ENCODE measurements at regions of chr9 and their contacts with region 1.

Region 1: DNA sequence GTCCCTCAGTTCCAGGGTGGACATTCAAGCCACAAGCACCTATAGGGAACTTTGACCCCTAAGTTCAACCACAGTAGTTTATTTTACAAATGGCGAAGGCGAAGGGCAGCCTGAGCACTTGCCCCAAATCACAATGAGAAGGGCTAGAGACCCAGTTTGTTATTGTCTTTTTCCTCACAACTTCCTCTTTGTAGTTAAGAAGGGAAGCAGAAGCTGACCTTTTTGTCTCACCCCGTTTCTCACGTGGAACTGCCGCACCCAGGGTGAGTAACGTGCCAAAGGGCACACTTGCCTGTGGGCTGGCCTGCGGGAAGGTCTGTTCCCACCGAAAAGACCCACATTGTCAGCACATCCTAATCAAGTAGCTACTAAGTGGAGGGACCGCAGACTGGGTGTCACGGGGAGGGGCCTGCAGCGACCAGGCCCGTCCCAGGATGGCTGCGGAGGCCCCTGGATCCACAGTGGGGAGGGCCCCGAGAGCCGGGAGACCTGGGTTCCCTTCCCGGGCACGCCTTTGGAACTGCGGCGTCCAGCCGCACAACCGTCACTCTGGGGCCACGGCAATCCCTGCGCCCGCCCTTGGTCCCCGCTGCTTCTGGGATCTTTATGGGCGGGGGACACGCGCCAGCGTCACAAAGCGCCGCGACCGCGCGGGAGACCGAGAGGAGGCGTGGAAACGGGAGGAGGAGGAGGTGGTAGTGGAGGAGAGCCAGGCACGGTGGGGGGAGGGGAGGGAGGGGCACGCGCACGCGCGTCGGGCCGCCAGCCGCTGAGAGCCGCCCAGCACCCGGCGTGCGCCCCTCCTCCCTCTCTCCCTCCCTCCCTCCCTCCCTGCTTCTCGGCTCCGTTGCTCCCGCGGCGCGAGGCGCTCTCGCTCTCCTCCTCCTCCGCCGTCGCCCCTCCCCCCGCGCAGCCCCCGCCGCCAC is at the start of gene UBE2R2:
- DNase-seq: peak; percentile 92 to 96 (median 94)
- H3K4me3 ChIP-seq: peak within 1 kb of the TSS; percentile 64 to 94
- H3K4me3 Mint-ChIP-seq: peak within 1 kb of the TSS; percentile 91 to 99 (median 96)
- H3K27ac ChIP-seq: peak within 1 kb of the TSS; percentile 89
- H3K27ac Mint-ChIP-seq: peak within 1 kb of the TSS; percentile 96 to 99 (median 98)
- H3K4me1 ChIP-seq: peaks cover 39% of the 10 kb centered on the region
- H3K4me1 Mint-ChIP-seq: peaks cover 30 to 59% (median 44%) of the 10 kb centered on the region in 4 donors
- H3K27me3 ChIP-seq: no peaks in the 10 kb centered on the region
- H3K27me3 Mint-ChIP-seq: no peaks in the 10 kb centered on the region
- total RNA-seq, gene UBE2R2: 31.0 to 31.4 TPM

Region 2: GRCh38 chr9:33024966-33025571 is 791.5 kb before region 1 on chr9 and contains the start of gene DNAJA1:
- CTCF ChIA-PET with region 1: no interaction called
- POLR2A ChIA-PET with region 1: no interaction called
- intact Hi-C with region 1: loop called (anchors 10 kb)
- DNase-seq: peak; percentile 92 to 98 (median 97)
- H3K4me3 ChIP-seq: peak within 1 kb of the TSS; percentile 96 to 100
- H3K4me3 Mint-ChIP-seq: peak within 1 kb of the TSS; percentile 92 to 99 (median 96)
- H3K27ac ChIP-seq: peak within 1 kb of the TSS; percentile 100
- H3K27ac Mint-ChIP-seq: peak within 1 kb of the TSS; percentile 94 to 98 (median 97)
- H3K4me1 ChIP-seq: peaks cover 63% of the 10 kb centered on the region
- H3K4me1 Mint-ChIP-seq: peaks cover 41 to 82% (median 66%) of the 10 kb centered on the region in 4 donors
- H3K27me3 ChIP-seq: no peaks in the 10 kb centered on the region
- H3K27me3 Mint-ChIP-seq: no peaks in the 10 kb centered on the region
- total RNA-seq, gene DNAJA1: 79.8 to 84.4 TPM

Region 3: GRCh38 chr9:33415501-33416038 is 401.0 kb before region 1 on chr9:
- CTCF ChIA-PET with region 1: no interaction called
- POLR2A ChIA-PET with region 1: no interaction called
- intact Hi-C with region 1: loop called (anchors 5 kb)
- DNase-seq: peak; percentile 97 to 98 (median 97)
- H3K4me3 ChIP-seq: peak overlapping the region; percentile 31 to 50
- H3K4me3 Mint-ChIP-seq: peak overlapping the region; percentile 71 to 92 (median 86)
- H3K27ac ChIP-seq: peak overlapping the region; percentile 65
- H3K27ac Mint-ChIP-seq: peak overlapping the region; percentile 92 to 99 (median 98)
- H3K4me1 ChIP-seq: peaks cover 54% of the 10 kb centered on the region
- H3K4me1 Mint-ChIP-seq: peaks cover 38 to 65% (median 57%) of the 10 kb centered on the region in 4 donors
- H3K27me3 ChIP-seq: no peaks in the 10 kb centered on the region
- H3K27me3 Mint-ChIP-seq: no peaks in the 10 kb centered on the region

Region 4: GRCh38 chr9:33721674-33722358 is 94.8 kb before region 1 on chr9:
- CTCF ChIA-PET with region 1: no interaction called
- POLR2A ChIA-PET with region 1: no interaction called
- intact Hi-C with region 1: no loop called
- DNase-seq: peak; percentile 79 to 85 (median 84)
- H3K4me3 ChIP-seq: no peak overlapping the region
- H3K4me3 Mint-ChIP-seq: peak overlapping the region in 1 of 8 donors; percentile 27
- H3K27ac ChIP-seq: no peak overlapping the region
- H3K27ac Mint-ChIP-seq: peak overlapping the region in 1 of 7 donors; percentile 63
- H3K4me1 ChIP-seq: no peaks in the 10 kb centered on the region
- H3K4me1 Mint-ChIP-seq: peaks cover 0 to 11% (median under 1%) of the 10 kb centered on the region in 4 donors
- H3K27me3 ChIP-seq: no peaks in the 10 kb centered on the region
- H3K27me3 Mint-ChIP-seq: peaks cover 6 to 7% of the 10 kb centered on the region in 2 donors

Region 5: GRCh38 chr9:33852216-33852826 is 35.7 kb after region 1 on chr9:
- CTCF ChIA-PET with region 1: interaction called, 318 read pairs
- POLR2A ChIA-PET with region 1: interaction called, 10 read pairs
- intact Hi-C with region 1: loop called (anchors 1 kb)
- DNase-seq: peak; percentile 46 to 54 (median 51)
- H3K4me3 ChIP-seq: no peak overlapping the region
- H3K4me3 Mint-ChIP-seq: no peak overlapping the region
- H3K27ac ChIP-seq: no peak overlapping the region
- H3K27ac Mint-ChIP-seq: peak overlapping the region in 3 of 7 donors; percentile 46 to 75 (median 67)
- H3K4me1 ChIP-seq: peaks cover 37% of the 10 kb centered on the region
- H3K4me1 Mint-ChIP-seq: peaks cover 23 to 58% (median 41%) of the 10 kb centered on the region in 4 donors
- H3K27me3 ChIP-seq: no peaks in the 10 kb centered on the region
- H3K27me3 Mint-ChIP-seq: no peaks in the 10 kb centered on the region

Region 6: DNA sequence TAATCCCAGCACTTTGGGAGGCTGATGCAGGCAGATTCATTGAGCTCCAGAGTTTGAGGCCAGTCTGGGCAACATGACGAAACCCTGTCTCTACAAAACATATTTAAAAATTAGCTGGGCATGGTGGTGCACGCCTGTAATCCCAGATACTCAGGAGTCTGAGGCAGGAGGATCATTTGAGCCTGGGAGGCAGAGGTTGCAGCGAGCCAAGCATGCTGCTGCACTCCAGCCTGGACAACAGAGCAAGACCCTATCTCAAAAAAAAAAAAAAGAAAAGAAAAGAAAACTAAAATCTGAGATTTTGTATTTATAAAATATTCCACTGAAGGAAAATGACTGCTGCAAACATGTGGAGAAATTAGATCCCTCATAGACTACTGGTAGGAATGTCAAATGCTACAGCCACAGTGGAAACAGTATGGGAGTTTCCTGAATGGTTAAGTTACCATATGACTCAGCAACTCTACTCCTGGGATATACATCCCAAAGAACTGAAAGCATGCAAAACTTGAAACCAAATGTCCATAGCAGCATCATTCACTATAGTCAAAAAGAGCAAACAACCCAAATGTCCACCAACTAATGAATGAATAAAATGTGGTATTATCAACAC is 126.0 kb after region 1 on chr9:
- CTCF ChIA-PET with region 1: no interaction called
- POLR2A ChIA-PET with region 1: no interaction called
- intact Hi-C with region 1: no loop called
- DNase-seq: no peak
- H3K4me3 ChIP-seq: no peak overlapping the region
- H3K4me3 Mint-ChIP-seq: no peak overlapping the region
- H3K27ac ChIP-seq: no peak overlapping the region
- H3K27ac Mint-ChIP-seq: peak overlapping the region in 1 of 7 donors; percentile 41
- H3K4me1 ChIP-seq: no peaks in the 10 kb centered on the region
- H3K4me1 Mint-ChIP-seq: peaks cover 0 to 4% (median 2%) of the 10 kb centered on the region in 4 donors
- H3K27me3 ChIP-seq: no peaks in the 10 kb centered on the region
- H3K27me3 Mint-ChIP-seq: no peaks in the 10 kb centered on the region

Region 7: DNA sequence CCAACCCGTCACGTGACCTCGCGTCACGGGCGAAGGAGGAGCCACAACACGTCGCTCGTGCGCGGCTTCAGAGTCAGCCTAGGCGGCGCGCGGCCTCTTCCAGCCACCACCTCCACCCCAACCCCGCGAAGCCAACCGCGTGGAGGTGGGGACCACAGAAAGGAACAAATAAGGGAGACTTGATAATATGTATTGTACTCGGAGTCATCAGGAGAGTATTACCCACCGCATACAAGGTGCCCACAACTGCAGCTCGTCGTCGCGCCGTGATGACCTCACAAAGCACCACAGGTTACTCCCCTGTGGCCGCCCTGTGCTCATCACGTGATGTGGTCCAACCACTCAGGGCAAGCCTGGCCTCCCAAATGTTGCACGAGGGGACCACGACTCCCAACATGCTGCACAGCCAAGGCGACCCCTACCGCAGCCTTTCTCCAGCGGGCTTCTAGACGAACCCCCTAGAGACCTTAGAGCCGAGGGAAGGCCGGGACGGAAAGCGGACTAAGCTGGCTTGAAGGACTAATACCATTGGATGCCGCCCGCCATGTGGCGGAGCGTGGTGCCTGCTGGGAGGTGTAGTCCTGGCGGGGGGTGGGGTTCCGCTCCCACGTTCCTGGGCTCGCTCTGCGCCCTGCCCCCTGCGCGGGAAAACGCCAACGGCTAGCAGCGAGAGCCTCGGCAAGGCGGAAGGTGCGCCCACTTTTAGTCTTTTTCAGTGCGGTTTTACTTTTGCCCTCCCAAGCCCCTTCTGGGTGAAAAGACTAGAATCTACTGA is 232.5 kb after region 1 on chr9:
- CTCF ChIA-PET with region 1: interaction called, 7 read pairs
- POLR2A ChIA-PET with region 1: interaction called, 12 read pairs
- intact Hi-C with region 1: loop called (anchors 1 kb)
- DNase-seq: peak; percentile 97 to 99 (median 97)
- H3K4me3 ChIP-seq: peak overlapping the region; percentile 90 to 100
- H3K4me3 Mint-ChIP-seq: peak overlapping the region; percentile 95 to 99 (median 98)
- H3K27ac ChIP-seq: peak overlapping the region; percentile 88
- H3K27ac Mint-ChIP-seq: peak overlapping the region; percentile 98 to 100 (median 99)
- H3K4me1 ChIP-seq: peaks cover 27% of the 10 kb centered on the region
- H3K4me1 Mint-ChIP-seq: peaks cover 23 to 43% (median 31%) of the 10 kb centered on the region in 4 donors
- H3K27me3 ChIP-seq: no peaks in the 10 kb centered on the region
- H3K27me3 Mint-ChIP-seq: no peaks in the 10 kb centered on the region

Region 8: GRCh38 chr9:34328987-34329832 is 512.6 kb after region 1 on chr9 and contains the starts of genes KIF24 and NUDT2:
- CTCF ChIA-PET with region 1: no interaction called
- POLR2A ChIA-PET with region 1: no interaction called
- intact Hi-C with region 1: loop called (anchors 5 kb)
- DNase-seq: peak; percentile 94 to 99 (median 98)
- H3K4me3 ChIP-seq: peak within 1 kb of the TSS; percentile 92 to 100
- H3K4me3 Mint-ChIP-seq: peak within 1 kb of the TSS; percentile 92 to 97 (median 94)
- H3K27ac ChIP-seq: peak within 1 kb of the TSS; percentile 87
- H3K27ac Mint-ChIP-seq: peak within 1 kb of the TSS; percentile 87 to 99 (median 98)
- H3K4me1 ChIP-seq: peaks cover 17% of the 10 kb centered on the region
- H3K4me1 Mint-ChIP-seq: peaks cover 14 to 38% (median 28%) of the 10 kb centered on the region in 4 donors
- H3K27me3 ChIP-seq: no peaks in the 10 kb centered on the region
- H3K27me3 Mint-ChIP-seq: no peaks in the 10 kb centered on the region
- total RNA-seq, gene KIF24: 0.22 to 0.32 TPM
- total RNA-seq, gene NUDT2: 21.0 TPM

Region 9: GRCh38 chr9:34458013-34458958 is 641.7 kb after region 1 on chr9 and contains the starts of genes DNAI1 and FAM219A:
- CTCF ChIA-PET with region 1: no interaction called
- POLR2A ChIA-PET with region 1: no interaction called
- intact Hi-C with region 1: loop called (anchors 5 kb)
- DNase-seq: peak; percentile 98 to 100 (median 99)
- H3K4me3 ChIP-seq: peak within 1 kb of the TSS; percentile 44 to 61
- H3K4me3 Mint-ChIP-seq: peak within 1 kb of the TSS; percentile 90 to 95 (median 92)
- H3K27ac ChIP-seq: peak within 1 kb of the TSS; percentile 5
- H3K27ac Mint-ChIP-seq: peak within 1 kb of the TSS; percentile 49 to 90 (median 88)
- H3K4me1 ChIP-seq: peaks cover 19% of the 10 kb centered on the region
- H3K4me1 Mint-ChIP-seq: peaks cover 18 to 30% (median 24%) of the 10 kb centered on the region in 4 donors
- H3K27me3 ChIP-seq: no peaks in the 10 kb centered on the region
- H3K27me3 Mint-ChIP-seq: no peaks in the 10 kb centered on the region
- total RNA-seq, gene DNAI1: not detected
- total RNA-seq, gene FAM219A: 13.9 to 16.3 TPM